Activated CD4-positive, alpha-beta T cell treated with anti-CD3 and anti-CD28 coated beads, Interleukin-2, amount 10 ng/mL, durations not matched to agents 24 days and 14 days (primary cell): ENCODE measurements at regions of chr19 and their contacts with region 1.

Region 1: DNA sequence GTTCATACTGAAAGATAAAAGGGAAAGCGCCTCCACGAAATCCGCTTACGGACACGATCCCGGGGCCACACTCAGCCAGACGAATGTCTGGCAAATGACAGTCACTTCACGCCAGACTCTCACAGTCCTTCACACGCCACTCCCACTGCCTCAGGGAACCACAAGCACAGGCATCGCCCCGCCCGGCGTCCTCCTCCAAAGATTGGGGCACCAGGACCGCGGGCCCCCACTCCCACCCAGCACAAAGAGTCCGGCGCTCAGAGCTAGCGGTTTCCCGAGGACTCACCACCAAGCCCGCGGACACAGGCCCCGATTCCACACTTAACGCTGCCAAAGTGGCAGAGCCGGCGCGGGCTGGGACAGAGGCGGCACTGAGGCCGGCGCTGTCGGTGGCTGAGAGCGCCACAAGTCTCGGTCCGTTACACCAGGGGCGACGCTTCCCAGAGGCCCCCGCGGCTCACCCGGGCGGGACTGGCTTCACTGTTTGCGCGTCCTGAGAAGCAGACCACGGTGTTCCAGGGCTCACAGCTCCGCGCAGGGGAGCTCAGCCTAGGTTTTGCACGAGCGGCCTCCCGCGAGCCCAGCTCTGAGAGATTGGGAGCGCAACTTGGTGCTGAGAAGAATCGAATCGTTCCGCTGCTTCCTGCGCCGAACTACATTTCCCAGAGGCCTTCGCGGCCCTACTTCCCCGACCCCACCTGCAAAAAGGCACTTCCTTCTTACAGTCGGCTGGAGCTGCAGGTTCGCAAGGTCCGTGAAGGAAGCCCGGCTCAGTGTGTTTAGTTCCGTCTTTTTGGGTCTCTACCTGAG is at the start of gene ZNF569:
- DNase-seq: peak; percentile 96
- H3K4me3 Mint-ChIP-seq: peak within 1 kb of the TSS; percentile 90
- H3K27ac Mint-ChIP-seq: peak within 1 kb of the TSS; percentile 93
- H3K4me1 Mint-ChIP-seq: peaks cover 19% of the 10 kb centered on the region
- H3K27me3 Mint-ChIP-seq: no peaks in the 10 kb centered on the region
- total RNA-seq, gene ZNF569: 3.4 and 3.5 TPM in 2 replicates

Region 2: DNA sequence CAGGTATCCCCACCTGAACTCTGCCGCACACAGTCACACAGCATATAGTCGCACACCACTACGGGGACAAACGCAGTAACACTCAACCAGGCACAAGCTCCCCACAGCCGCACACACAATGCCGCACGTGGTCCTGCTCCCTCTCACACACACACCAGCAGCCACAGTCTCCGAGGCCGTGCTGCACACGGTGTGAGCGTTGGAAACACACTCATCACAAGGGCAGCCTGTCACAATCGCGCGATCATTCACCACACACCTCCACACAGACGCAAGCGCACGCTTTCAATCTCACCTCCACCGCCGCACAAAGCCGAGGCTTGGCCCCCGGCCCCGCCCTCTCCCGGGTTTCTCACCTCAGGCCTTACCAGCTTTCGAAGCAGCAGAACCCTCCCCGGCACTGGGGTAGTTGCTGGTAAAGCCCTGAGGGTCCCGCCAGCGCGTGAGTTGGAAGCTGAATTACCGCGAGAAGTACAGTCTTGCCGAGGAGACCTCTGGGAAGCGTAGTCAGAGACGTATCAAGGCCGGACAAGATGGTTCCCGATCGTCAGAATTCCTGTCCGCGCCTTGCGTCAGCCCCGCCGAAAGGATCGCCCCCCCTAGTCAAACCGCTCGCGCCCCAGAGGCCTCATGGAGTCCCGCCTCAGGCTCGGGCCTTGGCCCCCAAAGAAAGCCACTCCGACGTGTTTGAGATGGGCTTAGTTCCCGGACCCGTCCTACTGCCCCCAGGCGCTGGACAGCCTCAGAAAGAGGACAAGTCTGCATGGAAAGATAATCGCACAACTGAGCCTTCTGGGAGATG is 977.7 kb before region 1 on chr19 and contains the start of gene ZNF566:
- intact Hi-C with region 1: loop called (anchors 5 kb)
- DNase-seq: peak; percentile 97
- H3K4me3 Mint-ChIP-seq: peak within 1 kb of the TSS; percentile 99
- H3K27ac Mint-ChIP-seq: peak within 1 kb of the TSS; percentile 99
- H3K4me1 Mint-ChIP-seq: peaks cover 23% of the 10 kb centered on the region
- H3K27me3 Mint-ChIP-seq: no peaks in the 10 kb centered on the region
- total RNA-seq, gene ZNF566: 7.2 and 8.5 TPM in 2 replicates

Region 3: GRCh38 chr19:36915992-36916830 is 550.8 kb before region 1 on chr19 and contains the starts of genes ZNF568 and ZNF829:
- intact Hi-C with region 1: loop called (anchors 2 kb)
- DNase-seq: peak; percentile 97
- H3K4me3 Mint-ChIP-seq: peak within 1 kb of the TSS; percentile 90
- H3K27ac Mint-ChIP-seq: peak within 1 kb of the TSS; percentile 96
- H3K4me1 Mint-ChIP-seq: peaks cover 19% of the 10 kb centered on the region
- H3K27me3 Mint-ChIP-seq: no peaks in the 10 kb centered on the region
- total RNA-seq, gene ZNF568: 4.4 and 6.1 TPM in 2 replicates
- total RNA-seq, gene ZNF829: 4.8 TPM in 2 replicates

Region 4: DNA sequence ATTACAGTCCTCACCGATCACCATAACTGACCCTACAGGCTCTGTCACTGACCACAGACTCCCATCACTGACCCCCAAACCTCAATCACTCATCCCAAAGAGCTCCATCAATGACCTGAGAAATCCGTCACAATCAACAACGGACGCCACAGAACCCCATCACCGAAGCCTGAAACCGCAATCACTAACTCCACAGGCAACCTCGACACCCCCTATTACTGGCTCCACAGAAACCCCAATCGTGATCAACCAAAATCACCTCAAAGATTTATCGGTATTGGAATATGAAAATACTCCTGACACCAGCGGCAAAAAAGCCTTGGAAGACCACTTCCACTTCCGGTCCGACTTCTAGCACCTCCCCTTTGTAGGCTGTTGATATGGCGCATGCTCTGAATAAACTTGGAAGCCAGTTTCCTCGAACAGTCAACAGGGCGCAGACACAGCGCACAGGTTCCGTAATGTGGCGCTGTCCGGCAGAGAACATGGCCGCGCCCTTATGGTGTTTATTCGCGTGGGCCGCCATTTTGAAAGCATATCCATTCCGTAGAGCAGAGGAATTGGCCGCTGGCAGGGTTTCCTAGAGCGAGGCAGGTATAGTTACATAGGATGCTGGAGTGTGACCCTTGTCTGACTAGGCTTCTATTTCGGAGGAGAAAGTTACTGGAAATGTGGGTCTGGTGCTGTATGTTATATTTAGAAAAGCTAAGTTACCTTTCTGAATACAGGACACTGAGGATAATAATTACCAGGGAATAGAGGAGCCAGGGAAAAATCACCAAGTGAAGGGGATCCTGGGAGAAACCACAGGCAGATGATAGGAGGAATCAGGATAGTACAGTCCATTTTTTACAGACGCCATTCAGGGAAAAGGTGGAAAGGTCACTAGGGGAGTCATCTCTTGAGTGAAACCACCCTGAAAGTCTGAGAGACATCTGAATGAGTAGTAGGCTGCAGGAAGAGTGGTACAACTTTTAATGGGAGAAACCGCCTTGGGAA is 294.3 kb before region 1 on chr19 and contains the start of gene ZNF585A:
- intact Hi-C with region 1: loop called (anchors 5 kb)
- DNase-seq: peak; percentile 94
- H3K4me3 Mint-ChIP-seq: no peak within 1 kb of the TSS
- H3K27ac Mint-ChIP-seq: no peak within 1 kb of the TSS
- H3K4me1 Mint-ChIP-seq: no peaks in the 10 kb centered on the region
- H3K27me3 Mint-ChIP-seq: no peaks in the 10 kb centered on the region
- total RNA-seq, gene ZNF585A: 2.7 and 3.9 TPM in 2 replicates

Region 5: GRCh38 chr19:37370880-37371661 is 95.9 kb before region 1 on chr19 and contains the start of gene ZNF527:
- intact Hi-C with region 1: loop called (anchors 1 kb)
- DNase-seq: peak; percentile 99
- H3K4me3 Mint-ChIP-seq: peak within 1 kb of the TSS; percentile 94
- H3K27ac Mint-ChIP-seq: peak within 1 kb of the TSS; percentile 91
- H3K4me1 Mint-ChIP-seq: peaks cover 9% of the 10 kb centered on the region
- H3K27me3 Mint-ChIP-seq: no peaks in the 10 kb centered on the region
- total RNA-seq, gene ZNF527: 3.5 and 4.9 TPM in 2 replicates

Region 6: DNA sequence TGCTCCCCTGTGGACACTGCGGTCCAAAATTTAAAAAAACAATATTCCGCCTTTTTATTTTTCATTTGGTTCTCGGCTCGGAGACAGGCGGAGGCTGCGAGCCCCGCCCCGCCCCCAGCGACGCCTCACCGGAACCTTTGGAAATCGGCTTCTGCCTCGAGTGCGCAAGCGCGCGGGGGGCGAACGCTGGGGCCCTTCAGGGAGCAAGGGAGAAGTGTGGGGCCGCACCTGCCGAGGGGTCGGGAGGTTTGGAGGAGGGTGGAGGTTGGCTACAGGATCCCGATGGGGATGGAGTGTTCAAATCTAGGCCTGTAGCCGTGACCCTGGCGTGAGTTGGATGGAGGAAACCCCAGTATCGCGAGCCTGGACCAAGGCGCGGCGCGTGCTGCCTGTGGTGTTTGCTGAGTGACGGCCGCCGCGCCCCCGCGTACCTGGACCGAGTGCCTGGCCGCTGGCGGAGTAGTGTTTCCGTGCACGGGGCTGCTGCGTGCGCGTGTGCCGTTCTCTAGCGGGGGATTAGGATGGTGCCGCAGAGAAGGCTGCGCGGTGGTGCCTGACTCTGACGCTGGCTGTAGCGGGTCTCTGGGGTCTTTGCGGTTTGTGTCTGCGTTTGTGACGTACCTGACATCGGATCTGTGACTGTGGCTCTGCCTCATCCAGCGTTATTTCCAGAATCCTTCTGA is 188.8 kb after region 1 on chr19:
- intact Hi-C with region 1: loop called (anchors 1 kb)
- DNase-seq: peak; percentile 96
- H3K4me3 Mint-ChIP-seq: peak overlapping the region; percentile 99
- H3K27ac Mint-ChIP-seq: peak overlapping the region; percentile 98
- H3K4me1 Mint-ChIP-seq: peaks cover 28% of the 10 kb centered on the region
- H3K27me3 Mint-ChIP-seq: no peaks in the 10 kb centered on the region

Region 7: DNA sequence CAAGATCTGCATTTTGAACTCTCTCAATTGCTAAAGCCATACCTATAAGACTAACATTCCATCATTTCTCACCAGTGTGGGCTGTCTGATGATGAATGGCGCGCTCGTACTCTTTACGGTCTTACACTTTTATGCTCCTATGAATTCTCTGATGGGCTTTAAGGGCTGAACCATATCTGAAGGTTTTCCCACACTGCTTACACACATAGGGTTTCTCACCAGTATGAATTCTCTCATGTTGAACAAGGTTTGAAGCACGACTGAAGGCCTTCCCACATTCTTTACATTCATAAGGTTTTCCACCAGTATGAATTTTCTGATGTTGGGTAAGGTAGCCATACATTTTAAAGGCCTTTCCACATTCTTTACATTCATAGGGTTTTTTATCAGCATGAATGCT is 271.4 kb after region 1 on chr19:
- intact Hi-C with region 1: no loop called
- DNase-seq: no peak
- H3K4me3 Mint-ChIP-seq: no peak overlapping the region
- H3K27ac Mint-ChIP-seq: no peak overlapping the region
- H3K4me1 Mint-ChIP-seq: no peaks in the 10 kb centered on the region
- H3K27me3 Mint-ChIP-seq: no peaks in the 10 kb centered on the region

Region 8: DNA sequence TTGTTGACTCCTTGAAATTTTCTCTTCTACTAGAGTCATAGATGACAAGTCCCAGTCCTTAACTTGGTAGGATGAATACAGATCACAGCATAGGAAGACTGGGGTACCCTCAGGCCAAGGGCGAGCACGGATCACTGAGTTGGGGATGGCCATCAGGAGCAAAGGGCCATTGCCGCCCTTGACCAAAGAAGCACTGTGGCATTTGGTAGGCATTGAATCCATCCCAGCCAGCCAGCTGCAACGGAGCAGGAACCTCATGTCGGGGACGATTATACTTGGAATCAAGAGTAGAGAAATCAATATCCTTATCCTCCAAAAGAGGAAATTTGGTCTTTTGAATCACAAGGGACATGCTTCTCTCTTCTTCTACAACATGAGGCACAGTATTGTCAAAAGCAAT is 362.5 kb after region 1 on chr19:
- intact Hi-C with region 1: no loop called
- DNase-seq: no peak
- H3K4me3 Mint-ChIP-seq: no peak overlapping the region
- H3K27ac Mint-ChIP-seq: no peak overlapping the region
- H3K4me1 Mint-ChIP-seq: no peaks in the 10 kb centered on the region
- H3K27me3 Mint-ChIP-seq: no peaks in the 10 kb centered on the region